OCI-LY7 (cell line): ENCODE measurements at regions of chr11 and their contacts with region 1.

Region 1: DNA sequence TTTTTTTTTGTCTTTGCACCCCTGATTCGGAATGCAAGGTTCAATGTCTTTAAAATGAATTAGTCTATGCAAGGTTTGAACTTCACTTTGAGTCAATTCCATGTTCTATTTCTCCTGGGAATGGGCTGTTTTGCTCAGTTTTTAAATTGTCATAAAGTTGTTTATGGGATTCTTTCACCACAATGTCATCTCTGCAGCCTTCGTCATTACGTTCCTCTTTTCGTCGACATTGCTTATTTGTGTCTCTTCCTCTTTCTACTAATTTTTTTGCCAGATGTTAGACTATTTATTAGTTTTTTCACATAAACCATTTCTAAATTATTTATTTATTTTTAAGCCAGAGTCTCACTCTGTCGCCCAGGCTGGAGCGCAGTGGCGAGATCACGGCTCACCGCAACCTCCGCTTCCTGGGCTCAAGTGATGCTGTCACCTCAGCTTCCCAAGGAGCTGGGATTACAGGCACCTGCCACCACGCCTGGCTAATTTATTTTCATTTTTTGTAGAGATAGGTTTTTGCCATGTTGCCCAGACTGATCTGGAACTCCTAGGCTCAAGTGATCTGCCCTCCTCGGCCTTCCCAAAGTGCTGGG is 7.1 kb upstream of the TNNT3 start:
- DNase-seq: no peak
- H3K4me3 ChIP-seq: no peak overlapping the region
- H3K27ac ChIP-seq: no peak overlapping the region
- H3K4me1 ChIP-seq: no peaks in the 10 kb centered on the region
- CTCF ChIP-seq: no peak

Region 2: GRCh38 chr11:1706634-1707400 is 205.6 kb before region 1 on chr11:
- CTCF ChIA-PET with region 1: no interaction called
- POLR2A ChIA-PET with region 1: no interaction called
- intact Hi-C with region 1: no loop called
- DNase-seq: no peak
- H3K4me3 ChIP-seq: no peak overlapping the region
- H3K27ac ChIP-seq: no peak overlapping the region
- H3K4me1 ChIP-seq: no peaks in the 10 kb centered on the region
- CTCF ChIP-seq: peak; percentile 39; the same call in 1 of the 2 replicates

Region 3: GRCh38 chr11:1935156-1936071 is 23.0 kb after region 1 on chr11:
- CTCF ChIA-PET with region 1: no interaction called
- POLR2A ChIA-PET with region 1: no interaction called
- intact Hi-C with region 1: loop called (anchors 2 kb)
- DNase-seq: no peak
- H3K4me3 ChIP-seq: no peak overlapping the region
- H3K27ac ChIP-seq: no peak overlapping the region
- H3K4me1 ChIP-seq: no peaks in the 10 kb centered on the region
- CTCF ChIP-seq: no peak

Region 4: DNA sequence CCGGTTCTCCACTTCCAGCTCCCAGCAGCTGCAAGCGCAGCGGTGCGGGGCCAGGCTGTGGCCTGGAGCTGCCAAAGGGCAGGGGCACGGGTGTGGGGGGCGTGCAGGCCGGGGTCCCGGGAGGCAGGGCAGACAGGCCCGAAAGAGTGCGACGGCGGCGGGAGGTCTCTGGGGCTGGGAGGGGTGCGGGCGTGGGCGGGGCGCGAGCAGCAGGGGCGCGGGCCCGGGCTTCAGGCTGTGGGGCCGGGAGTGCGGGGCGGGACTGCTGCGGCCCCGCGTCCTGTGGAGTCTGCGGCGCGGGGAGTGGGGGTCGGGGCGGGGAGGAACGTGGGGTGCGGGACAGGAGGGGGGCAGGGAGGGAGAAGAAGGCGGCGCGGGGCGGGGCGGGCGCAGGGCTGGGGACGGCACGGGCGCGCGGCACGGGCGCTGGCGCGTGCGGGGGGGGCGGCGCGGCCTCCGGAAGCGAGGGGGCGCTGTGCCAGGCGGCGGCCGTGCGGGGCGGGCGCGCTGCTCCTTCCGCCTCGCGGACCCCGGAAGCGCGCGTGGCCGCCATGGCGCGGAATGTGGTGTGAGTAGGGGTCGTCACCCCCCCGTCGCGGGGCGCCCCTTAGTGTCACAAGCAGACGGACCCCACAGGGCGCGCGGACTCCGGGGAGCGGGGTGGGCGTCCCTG is 34.6 kb after region 1 on chr11 and contains the start of gene MRPL23:
- CTCF ChIA-PET with region 1: no interaction called
- POLR2A ChIA-PET with region 1: no interaction called
- intact Hi-C with region 1: no loop called
- DNase-seq: no peak
- H3K4me3 ChIP-seq: no peak within 1 kb of the TSS
- H3K27ac ChIP-seq: no peak within 1 kb of the TSS
- H3K4me1 ChIP-seq: no peaks in the 10 kb centered on the region
- CTCF ChIP-seq: no peak
- total RNA-seq, gene MRPL23: 149 and 199 TPM in 2 replicates

Region 5: DNA sequence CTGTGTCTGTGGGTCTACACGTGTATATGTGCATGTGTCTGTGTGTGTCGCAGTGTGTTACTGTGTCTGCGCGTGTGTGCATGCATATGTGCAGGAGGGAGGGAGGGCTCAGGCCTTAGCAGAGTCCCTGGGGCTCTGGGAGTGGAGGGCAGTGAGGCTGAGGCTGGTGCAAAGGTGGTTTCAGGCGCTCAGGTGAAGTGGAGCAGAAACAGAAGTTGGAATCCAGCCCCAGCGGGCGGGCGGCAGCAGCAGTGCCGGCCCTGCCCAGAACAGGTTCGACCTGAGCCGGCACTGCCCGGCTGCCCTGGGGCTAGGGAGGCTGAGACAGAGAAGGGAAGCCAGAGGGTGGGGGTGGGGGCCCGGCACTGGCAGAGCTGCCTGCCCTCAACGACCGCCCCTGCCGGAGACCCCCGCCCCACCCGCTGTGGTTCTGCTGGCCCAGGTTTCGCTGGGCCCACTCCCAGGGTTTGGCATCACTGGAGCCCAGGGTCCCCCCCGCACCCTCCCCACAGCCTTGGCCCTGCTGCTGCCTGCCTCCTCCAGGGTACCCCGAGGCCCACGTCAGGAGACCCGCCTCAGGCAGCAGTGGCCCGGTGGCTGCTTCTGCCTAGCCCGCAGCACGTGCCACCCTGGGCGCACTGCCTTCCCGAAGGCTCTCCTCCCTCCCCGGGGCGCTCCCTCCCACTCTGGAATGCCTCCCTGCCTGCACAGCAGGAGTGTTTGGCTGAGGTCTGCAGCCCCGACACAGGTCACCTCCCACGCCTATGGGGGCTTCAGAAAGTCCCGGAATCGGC is 344.7 kb after region 1 on chr11:
- CTCF ChIA-PET with region 1: no interaction called
- POLR2A ChIA-PET with region 1: no interaction called
- intact Hi-C with region 1: no loop called
- DNase-seq: no peak
- H3K4me3 ChIP-seq: no peak overlapping the region
- H3K27ac ChIP-seq: no peak overlapping the region
- H3K4me1 ChIP-seq: no peaks in the 10 kb centered on the region
- CTCF ChIP-seq: no peak